Panc1 (cell line): ENCODE measurements at regions of chr7 and their contacts with region 1.

Region 1: DNA sequence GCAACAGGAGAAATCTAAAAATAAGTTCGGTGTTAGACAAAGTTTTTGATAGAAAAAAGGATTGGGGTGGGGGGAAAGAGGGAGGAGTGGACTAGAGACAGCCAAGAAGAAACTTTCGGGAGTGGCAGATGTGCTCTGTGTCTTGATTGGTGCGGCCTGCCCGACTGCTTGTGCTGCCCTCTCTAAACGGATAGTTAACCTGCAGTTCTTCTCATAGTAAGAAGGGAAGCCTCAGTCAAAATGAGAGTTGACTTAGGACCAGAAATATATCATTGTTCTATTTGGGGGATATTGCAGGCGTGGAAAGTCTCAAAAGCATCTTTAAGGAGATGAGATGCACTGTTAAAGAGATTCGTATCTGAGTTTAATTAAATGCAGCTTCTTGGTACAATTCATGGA is 39.3 kb downstream of the UBE3C start:
- DNase-seq: no peak
- ATAC-seq: no peak
- H3K4me3 ChIP-seq: no peak overlapping the region
- H3K27ac ChIP-seq: no peak overlapping the region
- H3K4me1 ChIP-seq: no peaks in the 10 kb centered on the region
- H3K27me3 ChIP-seq: no peaks in the 10 kb centered on the region
- CTCF ChIP-seq: no peak

Region 2: DNA sequence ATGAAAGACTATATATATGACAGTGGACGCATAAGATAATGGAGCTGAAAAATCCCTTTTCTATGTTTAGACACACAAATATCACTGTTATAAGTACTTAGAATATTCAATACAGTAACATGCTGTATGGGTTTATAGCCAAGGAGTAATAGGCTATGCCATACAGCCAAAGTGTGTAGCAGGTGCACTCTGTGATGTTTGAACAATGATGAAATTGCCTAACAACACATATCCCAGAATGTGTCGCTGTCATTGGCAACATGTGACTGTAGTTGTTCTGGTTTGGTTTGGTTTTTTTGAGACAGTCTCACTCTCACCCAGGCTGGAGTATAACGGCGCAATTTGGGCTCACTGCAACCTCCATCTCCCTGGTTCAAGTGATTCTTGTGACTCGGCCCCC is 202.4 kb before region 1 on chr7:
- CTCF ChIA-PET with region 1: no interaction called
- POLR2A ChIA-PET with region 1: no interaction called
- in situ Hi-C with region 1: no loop called
- intact Hi-C with region 1: no loop called
- DNase-seq: no peak
- ATAC-seq: no peak
- H3K4me3 ChIP-seq: no peak overlapping the region
- H3K27ac ChIP-seq: no peak overlapping the region
- H3K4me1 ChIP-seq: no peaks in the 10 kb centered on the region
- H3K27me3 ChIP-seq: no peaks in the 10 kb centered on the region
- CTCF ChIP-seq: no peak

Region 3: GRCh38 chr7:157037635-157038034 is 140.3 kb before region 1 on chr7:
- CTCF ChIA-PET with region 1: no interaction called
- POLR2A ChIA-PET with region 1: interaction called, 13 read pairs
- in situ Hi-C with region 1: no loop called
- intact Hi-C with region 1: no loop called
- DNase-seq: no peak
- ATAC-seq: no peak
- H3K4me3 ChIP-seq: no peak overlapping the region
- H3K27ac ChIP-seq: no peak overlapping the region
- H3K4me1 ChIP-seq: peaks cover 3% of the 10 kb centered on the region
- H3K27me3 ChIP-seq: no peaks in the 10 kb centered on the region
- CTCF ChIP-seq: no peak